Left cardiac atrium (tissue), 4 donors: ENCODE measurements at regions of chr5 and their contacts with region 1.

Region 1: DNA sequence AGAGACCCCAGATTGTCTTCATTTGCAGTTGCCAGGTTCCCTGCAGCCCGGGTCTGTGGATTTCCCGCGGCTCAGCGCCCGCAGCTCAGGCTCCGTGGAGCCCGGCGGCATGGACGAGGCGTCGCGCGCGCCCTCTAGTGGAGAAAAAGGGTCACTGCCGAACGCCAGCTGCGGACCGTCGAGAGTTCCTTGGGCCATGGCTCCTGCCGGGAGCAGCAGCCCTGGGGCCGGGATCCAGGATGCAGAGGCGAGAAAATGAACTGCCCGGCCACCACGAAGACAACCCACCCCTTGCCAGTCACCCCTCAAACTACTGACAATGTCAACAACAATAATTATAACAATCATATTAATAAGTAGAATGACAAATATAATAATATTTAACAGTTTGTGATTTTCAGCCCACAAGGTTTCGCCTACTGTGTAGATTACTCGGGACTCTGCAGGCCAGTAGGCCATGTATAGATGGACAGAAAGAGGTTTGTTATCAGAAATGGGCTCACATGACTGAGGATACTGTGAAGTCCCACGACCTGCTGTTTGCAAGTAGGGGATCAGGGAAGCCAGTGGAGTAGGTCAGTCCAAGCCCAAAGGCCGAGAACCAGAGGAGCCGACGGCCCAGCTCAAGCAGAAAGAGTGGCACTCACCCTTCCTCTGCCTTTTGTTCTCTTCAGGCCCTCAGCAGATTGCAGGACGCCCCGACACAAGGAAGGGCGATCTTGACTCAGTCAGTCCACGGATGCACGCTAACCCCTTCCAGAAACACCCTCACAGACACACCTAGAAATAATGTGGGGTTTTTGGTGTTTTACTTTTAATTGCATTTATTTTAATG is 43.1 kb downstream of the BOD1 start:
- DNase-seq: peak; percentile 76
- ATAC-seq: peak; percentile 94 to 96

Region 2: GRCh38 chr5:173293817-173294672 is 279.3 kb before region 1 on chr5:
- intact Hi-C with region 1: loop called in 1 of 2 experiments (anchors 5 kb)
- DNase-seq: peak; percentile 78
- ATAC-seq: peak; percentile 48 to 67

Region 3: GRCh38 chr5:173341961-173342430 is 231.3 kb before region 1 on chr5:
- intact Hi-C with region 1: loop called in 1 of 2 experiments (anchors 10 kb)
- DNase-seq: no peak
- ATAC-seq: no peak